BJ (cell line): ENCODE measurements at regions of chr12 and their contacts with region 1.

Region 1: GRCh38 chr12:121334513-121335343 is 17.5 kb downstream of the ANAPC5 start:
- DNase-seq: peak; percentile 11
- H3K4me3 ChIP-seq: no peak overlapping the region
- H3K27me3 ChIP-seq: no peaks in the 10 kb centered on the region
- CTCF ChIP-seq: peak; percentile 88

Region 2: GRCh38 chr12:121345151-121345815 is 10.6 kb after region 1 on chr12:
- CTCF ChIA-PET with region 1: interaction called, 17 read pairs
- POLR2A ChIA-PET with region 1: no interaction called
- DNase-seq: no peak
- H3K4me3 ChIP-seq: no peak overlapping the region
- H3K27me3 ChIP-seq: no peaks in the 10 kb centered on the region
- CTCF ChIP-seq: no peak

Region 3: DNA sequence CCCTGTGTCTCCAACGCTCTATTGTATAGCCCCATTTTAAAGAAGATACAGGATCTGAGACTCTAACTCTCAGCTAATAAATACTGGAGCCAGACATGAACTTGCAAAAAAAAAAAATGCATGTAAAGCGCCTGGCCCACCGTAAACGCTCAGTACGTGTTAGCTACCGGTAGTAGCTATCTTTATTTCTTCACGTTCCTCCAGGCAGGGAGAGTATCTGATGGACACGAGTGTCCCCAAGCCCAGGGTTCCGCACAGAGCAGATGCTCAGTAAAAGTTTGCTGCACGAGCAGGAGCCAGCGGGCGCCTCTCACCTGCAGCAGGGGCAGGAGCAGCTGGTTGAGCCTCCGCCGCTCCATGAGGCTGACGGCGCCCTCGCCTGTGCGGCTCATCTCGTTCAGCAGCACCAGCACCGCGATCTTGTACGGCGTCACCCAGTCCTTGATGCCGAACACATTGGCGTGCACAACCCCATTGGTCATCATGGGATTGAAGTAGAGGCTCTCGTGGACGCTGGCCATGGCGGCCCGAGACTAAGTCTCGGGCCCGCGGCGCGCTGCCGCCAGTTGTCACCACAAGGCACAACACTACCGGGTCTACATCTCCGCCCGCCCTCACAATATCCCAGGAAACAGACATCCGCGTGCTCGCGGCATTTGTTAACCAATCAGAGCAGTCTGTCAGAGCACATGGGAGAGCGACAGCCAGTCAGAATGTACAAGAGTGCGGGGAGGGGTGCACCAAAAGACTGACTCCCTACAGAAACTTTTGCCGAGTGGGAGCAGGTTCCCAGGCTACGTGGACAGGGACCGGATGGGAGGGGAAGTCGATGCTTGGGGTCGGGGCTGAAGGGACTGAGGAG is 17.3 kb after region 1 on chr12 and contains the start of gene ANAPC5:
- CTCF ChIA-PET with region 1: interaction called, 17 read pairs
- POLR2A ChIA-PET with region 1: no interaction called
- DNase-seq: peak; percentile 97
- H3K4me3 ChIP-seq: peak within 1 kb of the TSS; percentile 91
- H3K27me3 ChIP-seq: no peaks in the 10 kb centered on the region
- CTCF ChIP-seq: no peak
- polyA plus RNA-seq, gene ANAPC5: 159 and 194 TPM in 2 replicates